Activated CD4-positive, alpha-beta memory T cell treated with anti-CD3 and anti-CD28 coated beads for 36 hours (primary cell): ENCODE measurements at regions of chr7 and their contacts with region 1.

Region 1: GRCh38 chr7:17304926-17305325 is 6.5 kb downstream of the AHR start:
- DNase-seq: peak; percentile 25
- H3K4me3 Mint-ChIP-seq: peak overlapping the region; percentile 56
- H3K27ac Mint-ChIP-seq: peak overlapping the region; percentile 83
- H3K4me1 Mint-ChIP-seq: peaks cover 26% of the 10 kb centered on the region
- H3K27me3 Mint-ChIP-seq: no peaks in the 10 kb centered on the region

Region 2: GRCh38 chr7:16982640-16983350 is 322.1 kb before region 1 on chr7:
- CTCF ChIA-PET with region 1: interaction called, 36 read pairs
- POLR2A ChIA-PET with region 1: no interaction called
- intact Hi-C with region 1: loop called (anchors 1 kb)
- DNase-seq: peak; percentile 34
- H3K4me3 Mint-ChIP-seq: no peak overlapping the region
- H3K27ac Mint-ChIP-seq: no peak overlapping the region
- H3K4me1 Mint-ChIP-seq: peaks cover 2% of the 10 kb centered on the region
- H3K27me3 Mint-ChIP-seq: peaks cover 4% of the 10 kb centered on the region

Region 3: GRCh38 chr7:17139081-17139480 is 165.8 kb before region 1 on chr7:
- CTCF ChIA-PET with region 1: interaction called, 16 read pairs
- POLR2A ChIA-PET with region 1: no interaction called
- intact Hi-C with region 1: loop called (anchors 1 kb)
- DNase-seq: no peak
- H3K4me3 Mint-ChIP-seq: no peak overlapping the region
- H3K27ac Mint-ChIP-seq: peak overlapping the region; percentile 82
- H3K4me1 Mint-ChIP-seq: peaks cover 70% of the 10 kb centered on the region
- H3K27me3 Mint-ChIP-seq: no peaks in the 10 kb centered on the region

Region 4: GRCh38 chr7:17234398-17235031 is 70.4 kb before region 1 on chr7:
- CTCF ChIA-PET with region 1: no interaction called
- POLR2A ChIA-PET with region 1: no interaction called
- intact Hi-C with region 1: loop called (anchors 1 kb)
- DNase-seq: peak; percentile 83
- H3K4me3 Mint-ChIP-seq: peak overlapping the region; percentile 71
- H3K27ac Mint-ChIP-seq: peak overlapping the region; percentile 89
- H3K4me1 Mint-ChIP-seq: peaks cover 48% of the 10 kb centered on the region
- H3K27me3 Mint-ChIP-seq: no peaks in the 10 kb centered on the region

Region 5: DNA sequence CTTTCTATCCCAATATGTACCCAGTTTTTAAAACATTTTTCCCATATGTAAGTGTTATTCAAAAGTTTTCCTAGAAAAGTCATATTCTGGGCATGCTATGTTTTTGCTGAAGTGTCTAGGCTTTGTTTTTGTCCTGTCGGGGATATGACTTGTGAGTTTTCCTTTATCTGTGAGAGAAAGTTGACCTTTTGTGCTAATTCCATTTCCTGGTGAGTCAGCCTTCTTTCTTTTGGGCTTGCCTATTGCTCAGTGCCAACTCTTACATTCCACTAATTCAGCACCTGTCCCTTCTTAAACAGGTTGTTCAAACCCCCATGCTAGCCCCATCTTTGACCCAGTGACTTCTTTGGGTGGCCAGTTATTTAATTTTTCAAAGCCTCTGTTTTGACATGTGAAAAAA is 139.7 kb after region 1 on chr7:
- CTCF ChIA-PET with region 1: no interaction called
- POLR2A ChIA-PET with region 1: no interaction called
- intact Hi-C with region 1: loop called (anchors 1 kb)
- DNase-seq: no peak
- H3K4me3 Mint-ChIP-seq: no peak overlapping the region
- H3K27ac Mint-ChIP-seq: no peak overlapping the region
- H3K4me1 Mint-ChIP-seq: peaks cover 6% of the 10 kb centered on the region
- H3K27me3 Mint-ChIP-seq: peaks cover 18% of the 10 kb centered on the region

Region 6: DNA sequence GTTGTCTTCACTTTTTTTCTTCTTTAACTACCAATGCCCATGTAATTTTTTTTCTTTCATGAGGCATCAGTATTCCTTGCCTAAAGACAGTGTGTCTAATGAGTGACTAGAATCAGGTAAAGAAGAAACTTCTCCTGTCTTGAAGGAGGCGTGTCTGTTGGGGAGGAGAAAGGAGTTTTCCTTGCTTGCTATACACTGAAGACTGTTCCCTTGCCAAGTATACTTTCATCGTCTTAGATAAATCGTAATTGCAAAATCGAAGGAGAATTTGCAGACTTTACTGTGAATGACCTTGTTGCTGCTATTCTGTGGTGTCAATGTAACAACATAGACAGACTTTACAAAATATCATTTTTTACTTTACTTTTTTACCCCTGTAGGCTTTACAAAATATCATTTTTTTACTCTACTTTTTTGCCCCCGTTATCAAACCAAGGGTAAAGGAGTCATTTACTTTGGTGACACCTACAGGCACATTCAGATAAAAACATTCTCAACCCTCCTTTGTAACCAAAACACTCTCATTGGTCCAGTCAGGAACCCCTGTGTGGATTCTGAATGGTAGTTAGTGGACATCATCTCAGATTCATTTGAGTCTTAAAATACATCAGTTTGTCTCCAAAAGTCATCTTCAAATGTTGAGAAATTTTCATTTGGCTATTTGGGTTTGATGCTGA is 226.0 kb after region 1 on chr7:
- CTCF ChIA-PET with region 1: interaction called, 5 read pairs
- POLR2A ChIA-PET with region 1: no interaction called
- intact Hi-C with region 1: loop called (anchors 1 kb)
- DNase-seq: no peak
- H3K4me3 Mint-ChIP-seq: no peak overlapping the region
- H3K27ac Mint-ChIP-seq: no peak overlapping the region
- H3K4me1 Mint-ChIP-seq: peaks cover 3% of the 10 kb centered on the region
- H3K27me3 Mint-ChIP-seq: peaks cover 5% of the 10 kb centered on the region

Region 7: DNA sequence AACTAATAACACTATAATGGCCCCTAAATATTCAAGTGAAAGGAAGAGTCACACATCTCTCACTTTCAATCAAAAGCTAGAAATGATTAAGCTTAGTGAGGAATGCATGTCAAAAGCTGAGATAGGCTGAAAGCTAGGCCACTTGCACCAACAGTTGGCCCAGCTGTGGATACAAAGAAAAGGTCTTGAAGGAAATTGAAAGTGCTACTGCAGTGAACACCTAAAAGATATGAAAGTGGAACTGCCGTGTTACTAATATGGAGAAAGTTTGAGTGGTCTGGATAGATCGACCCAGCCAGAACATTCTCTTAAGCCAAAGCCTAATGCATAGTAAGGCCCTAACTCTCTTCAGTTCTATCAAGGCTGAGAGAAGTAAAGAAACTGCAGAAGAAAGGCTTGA is 647.5 kb after region 1 on chr7:
- CTCF ChIA-PET with region 1: no interaction called
- POLR2A ChIA-PET with region 1: no interaction called
- intact Hi-C with region 1: loop called (anchors 1 kb)
- DNase-seq: peak; percentile 63
- H3K4me3 Mint-ChIP-seq: peak overlapping the region; percentile 28
- H3K27ac Mint-ChIP-seq: peak overlapping the region; percentile 44
- H3K4me1 Mint-ChIP-seq: peaks cover 23% of the 10 kb centered on the region
- H3K27me3 Mint-ChIP-seq: peaks cover 3% of the 10 kb centered on the region